ENCODE measurements at regions of chr14 and their contacts with region 1.

Region 1: GRCh38 chr14:106790189-106791036 is 1264.0 kb downstream of the TMEM121 start:
- DNase-seq: peak; percentile 47 to 70 (median 54)
- H3K4me3 ChIP-seq: no peak overlapping the region
- H3K4me3 Mint-ChIP-seq: no peak overlapping the region
- H3K27ac ChIP-seq: no peak overlapping the region
- H3K27ac Mint-ChIP-seq: no peak overlapping the region
- H3K4me1 ChIP-seq: peaks cover 10% of the 10 kb centered on the region
- H3K4me1 Mint-ChIP-seq: peaks cover 0 to 13% (median 7%) of the 10 kb centered on the region in 4 donors
- H3K27me3 ChIP-seq: peaks cover 4% of the 10 kb centered on the region
- H3K27me3 Mint-ChIP-seq: peaks cover 9 to 12% of the 10 kb centered on the region in 2 donors

Region 2: DNA sequence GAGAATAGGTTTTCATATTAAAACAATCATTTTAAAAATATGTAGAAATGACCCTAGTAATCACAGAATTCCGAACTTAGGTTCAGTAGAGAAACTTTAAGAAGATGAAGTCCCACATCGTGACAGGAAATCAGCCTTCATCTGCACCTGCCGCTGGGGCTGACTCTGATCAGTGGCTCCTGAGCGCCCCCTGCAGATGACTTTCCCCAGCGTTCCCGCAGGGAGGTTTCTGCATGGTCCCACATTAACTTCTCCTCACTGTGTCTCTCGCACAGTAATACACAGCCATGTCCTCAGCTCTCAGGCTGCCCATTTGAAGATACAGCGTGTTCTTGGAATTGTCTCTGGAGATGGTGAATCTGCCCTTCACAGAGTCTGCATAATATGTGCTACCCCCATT is 133.0 kb before region 1 on chr14:
- CTCF ChIA-PET with region 1: interaction called, 11 read pairs
- POLR2A ChIA-PET with region 1: no interaction called
- intact Hi-C with region 1: no loop called
- DNase-seq: peak; percentile 38 to 59 (median 50)
- H3K4me3 ChIP-seq: no peak overlapping the region
- H3K4me3 Mint-ChIP-seq: peak overlapping the region in 2 of 8 donors; percentile 11 to 22
- H3K27ac ChIP-seq: no peak overlapping the region
- H3K27ac Mint-ChIP-seq: no peak overlapping the region
- H3K4me1 ChIP-seq: peaks cover 8% of the 10 kb centered on the region
- H3K4me1 Mint-ChIP-seq: peaks cover 10 to 24% (median 15%) of the 10 kb centered on the region in 4 donors
- H3K27me3 ChIP-seq: no peaks in the 10 kb centered on the region
- H3K27me3 Mint-ChIP-seq: peaks cover 0 to 3% of the 10 kb centered on the region in 2 donors

Region 3: GRCh38 chr14:106729551-106729950 is 60.9 kb before region 1 on chr14:
- CTCF ChIA-PET with region 1: no interaction called
- POLR2A ChIA-PET with region 1: no interaction called
- intact Hi-C with region 1: no loop called
- DNase-seq: no peak
- H3K4me3 ChIP-seq: no peak overlapping the region
- H3K4me3 Mint-ChIP-seq: no peak overlapping the region
- H3K27ac ChIP-seq: no peak overlapping the region
- H3K27ac Mint-ChIP-seq: no peak overlapping the region
- H3K4me1 ChIP-seq: peaks cover 10% of the 10 kb centered on the region
- H3K4me1 Mint-ChIP-seq: peaks cover 0 to 33% (median 2%) of the 10 kb centered on the region in 4 donors
- H3K27me3 ChIP-seq: no peaks in the 10 kb centered on the region
- H3K27me3 Mint-ChIP-seq: no peaks in the 10 kb centered on the region

Region 4: GRCh38 chr14:106802423-106803364 is 12.3 kb after region 1 on chr14:
- CTCF ChIA-PET with region 1: interaction called, 14 read pairs
- POLR2A ChIA-PET with region 1: no interaction called
- intact Hi-C with region 1: no loop called
- DNase-seq: no peak
- H3K4me3 ChIP-seq: no peak overlapping the region
- H3K4me3 Mint-ChIP-seq: no peak overlapping the region
- H3K27ac ChIP-seq: no peak overlapping the region
- H3K27ac Mint-ChIP-seq: no peak overlapping the region
- H3K4me1 ChIP-seq: no peaks in the 10 kb centered on the region
- H3K4me1 Mint-ChIP-seq: peaks cover 0 to 2% (median 0%) of the 10 kb centered on the region in 4 donors
- H3K27me3 ChIP-seq: peaks cover 6% of the 10 kb centered on the region
- H3K27me3 Mint-ChIP-seq: peaks cover 29 to 45% of the 10 kb centered on the region in 2 donors

Region 5: DNA sequence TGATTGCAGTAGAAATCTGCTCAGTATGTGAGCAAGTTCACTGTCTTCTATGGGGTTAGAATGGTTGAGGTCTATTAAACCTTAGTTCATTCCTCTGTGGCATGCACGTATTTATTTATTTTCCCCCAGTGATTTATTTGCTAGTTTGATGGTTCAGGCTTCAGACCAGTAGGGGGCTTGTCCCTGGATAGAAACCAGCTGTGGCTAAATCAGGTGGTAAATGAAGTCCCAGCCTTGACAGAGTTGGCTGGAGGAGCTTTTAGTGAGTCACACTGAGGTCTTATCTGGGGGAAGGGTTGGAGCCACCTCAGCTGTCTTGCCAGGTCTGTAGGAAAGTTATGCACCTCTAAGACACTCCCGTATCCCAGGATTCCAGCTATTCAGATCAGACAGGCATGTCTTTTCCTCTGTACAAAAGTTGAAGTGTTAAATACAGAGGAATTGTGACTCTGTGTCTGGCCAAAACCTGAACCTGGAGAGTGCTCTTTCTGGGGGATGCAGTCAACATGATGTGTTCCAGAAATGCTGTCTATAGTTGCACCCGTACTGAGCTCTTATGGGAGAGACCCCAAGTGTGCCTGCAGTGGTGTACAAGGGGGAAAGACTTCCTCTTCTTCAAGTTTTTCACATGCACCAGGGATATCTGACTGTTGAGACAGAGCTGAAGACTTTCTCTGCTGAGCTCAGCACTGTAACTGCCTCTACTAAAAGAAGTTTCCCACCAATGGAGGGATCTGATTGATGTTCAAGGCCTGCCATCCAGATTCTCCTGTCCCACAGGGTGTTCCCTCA is 58.1 kb after region 1 on chr14:
- CTCF ChIA-PET with region 1: no interaction called
- POLR2A ChIA-PET with region 1: no interaction called
- intact Hi-C with region 1: no loop called
- DNase-seq: no peak
- H3K4me3 ChIP-seq: no peak overlapping the region
- H3K4me3 Mint-ChIP-seq: peak overlapping the region in 1 of 8 donors; percentile 5
- H3K27ac ChIP-seq: no peak overlapping the region
- H3K27ac Mint-ChIP-seq: no peak overlapping the region
- H3K4me1 ChIP-seq: peaks cover 16% of the 10 kb centered on the region
- H3K4me1 Mint-ChIP-seq: peaks cover 5 to 28% (median 14%) of the 10 kb centered on the region in 4 donors
- H3K27me3 ChIP-seq: no peaks in the 10 kb centered on the region
- H3K27me3 Mint-ChIP-seq: peaks cover 0 to 2% of the 10 kb centered on the region in 2 donors